Activated CD4-positive, alpha-beta memory T cell treated with anti-CD3 and anti-CD28 coated beads for 36 hours (primary cell): ENCODE measurements at regions of chr7 and their contacts with region 1.

Region 1: GRCh38 chr7:47991741-47992311 is 12.4 kb upstream of the HUS1 start:
- DNase-seq: peak; percentile 93
- H3K4me3 Mint-ChIP-seq: peak overlapping the region; percentile 87
- H3K27ac Mint-ChIP-seq: peak overlapping the region; percentile 86
- H3K4me1 Mint-ChIP-seq: peaks cover 15% of the 10 kb centered on the region
- H3K27me3 Mint-ChIP-seq: no peaks in the 10 kb centered on the region

Region 2: GRCh38 chr7:47945261-47946001 is 46.4 kb before region 1 on chr7:
- CTCF ChIA-PET with region 1: interaction called, 12 read pairs
- POLR2A ChIA-PET with region 1: no interaction called
- intact Hi-C with region 1: no loop called
- DNase-seq: peak; percentile 81
- H3K4me3 Mint-ChIP-seq: no peak overlapping the region
- H3K27ac Mint-ChIP-seq: no peak overlapping the region
- H3K4me1 Mint-ChIP-seq: no peaks in the 10 kb centered on the region
- H3K27me3 Mint-ChIP-seq: no peaks in the 10 kb centered on the region

Region 3: GRCh38 chr7:47979145-47979831 is 12.5 kb before region 1 on chr7 and contains the start of gene HUS1:
- CTCF ChIA-PET with region 1: interaction called, 8 read pairs
- POLR2A ChIA-PET with region 1: no interaction called
- intact Hi-C with region 1: loop called (anchors 1 kb)
- DNase-seq: peak; percentile 96
- H3K4me3 Mint-ChIP-seq: peak within 1 kb of the TSS; percentile 84
- H3K27ac Mint-ChIP-seq: peak within 1 kb of the TSS; percentile 91
- H3K4me1 Mint-ChIP-seq: peaks cover 24% of the 10 kb centered on the region
- H3K27me3 Mint-ChIP-seq: no peaks in the 10 kb centered on the region
- total RNA-seq, gene HUS1: 38.6 to 38.9 TPM

Region 4: DNA sequence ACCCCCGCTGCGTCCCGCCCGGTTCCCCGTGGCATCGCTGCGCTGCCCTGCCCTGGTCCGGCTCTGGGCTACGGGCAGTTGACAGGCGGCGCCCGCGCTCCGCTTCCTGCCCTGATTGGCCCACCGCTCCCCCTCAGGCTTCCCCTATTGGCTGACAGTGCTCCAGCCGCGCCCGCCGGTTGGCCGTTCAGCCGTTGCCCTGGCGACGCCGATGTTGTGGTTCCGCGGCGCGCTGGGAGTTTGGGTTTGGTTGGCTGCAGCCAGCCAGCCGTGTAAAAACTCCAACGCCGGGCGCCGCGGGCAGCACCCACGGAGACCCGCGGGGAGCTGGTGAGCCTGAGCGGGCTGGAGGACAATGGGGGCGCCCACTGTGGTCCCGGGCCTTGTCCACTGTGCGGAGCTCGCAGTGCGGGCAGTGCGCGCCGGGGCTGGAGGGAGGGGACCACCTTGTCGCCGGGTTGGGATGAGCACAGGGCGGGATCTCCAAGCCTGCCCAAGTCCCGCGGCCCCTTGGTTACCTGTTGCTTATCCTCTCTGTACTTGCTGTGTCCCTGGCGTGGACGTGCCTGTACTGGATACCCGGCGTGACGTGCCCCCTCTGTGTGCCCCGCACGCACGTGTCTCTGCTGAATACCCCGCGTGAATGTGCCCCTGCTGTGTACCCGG is 43.6 kb after region 1 on chr7 and contains the start of gene C7orf57:
- CTCF ChIA-PET with region 1: interaction called, 6 read pairs
- POLR2A ChIA-PET with region 1: no interaction called
- intact Hi-C with region 1: loop called (anchors 1 kb)
- DNase-seq: peak; percentile 91
- H3K4me3 Mint-ChIP-seq: peak within 1 kb of the TSS; percentile 78
- H3K27ac Mint-ChIP-seq: no peak within 1 kb of the TSS
- H3K4me1 Mint-ChIP-seq: peaks cover 9% of the 10 kb centered on the region
- H3K27me3 Mint-ChIP-seq: peaks cover 15% of the 10 kb centered on the region
- total RNA-seq, gene C7orf57: 0.71 to 0.90 TPM

Region 5: GRCh38 chr7:48101968-48102367 is 110.1 kb after region 1 on chr7:
- CTCF ChIA-PET with region 1: interaction called, 29 read pairs
- POLR2A ChIA-PET with region 1: no interaction called
- intact Hi-C with region 1: loop called (anchors 1 kb)
- DNase-seq: peak; percentile 47
- H3K4me3 Mint-ChIP-seq: no peak overlapping the region
- H3K27ac Mint-ChIP-seq: peak overlapping the region; percentile 70
- H3K4me1 Mint-ChIP-seq: peaks cover 37% of the 10 kb centered on the region
- H3K27me3 Mint-ChIP-seq: no peaks in the 10 kb centered on the region

Region 6: GRCh38 chr7:48299580-48300169 is 307.8 kb after region 1 on chr7:
- CTCF ChIA-PET with region 1: no interaction called
- POLR2A ChIA-PET with region 1: no interaction called
- intact Hi-C with region 1: loop called (anchors 5 kb)
- DNase-seq: peak; percentile 68
- H3K4me3 Mint-ChIP-seq: no peak overlapping the region
- H3K27ac Mint-ChIP-seq: no peak overlapping the region
- H3K4me1 Mint-ChIP-seq: peaks cover 9% of the 10 kb centered on the region
- H3K27me3 Mint-ChIP-seq: peaks cover 2% of the 10 kb centered on the region